Vagina (tissue), 2 donors: ENCODE measurements at regions of chr11 and their contacts with region 1.

Region 1: GRCh38 chr11:83193315-83194280 is at the start of gene ANKRD42:
- DNase-seq: peak; percentile 96
- H3K4me3 ChIP-seq: peak within 1 kb of the TSS; percentile 69 to 88
- H3K27ac ChIP-seq: peak within 1 kb of the TSS; percentile 77
- H3K4me1 ChIP-seq: peaks cover 53% of the 10 kb centered on the region
- H3K27me3 ChIP-seq: no peaks in the 10 kb centered on the region
- CTCF ChIP-seq: no peak
- POLR2A ChIP-seq: peak in 1 of 2 donors; percentile 72
- total RNA-seq, gene ANKRD42: 10.3 TPM

Region 2: GRCh38 chr11:82900277-82901164 is 293.1 kb before region 1 on chr11 and contains the start of gene PRCP:
- intact Hi-C with region 1: loop called (anchors 5 kb)
- DNase-seq: peak; percentile 96 to 97
- H3K4me3 ChIP-seq: peak within 1 kb of the TSS; percentile 66 to 68
- H3K27ac ChIP-seq: peak within 1 kb of the TSS; percentile 93
- H3K4me1 ChIP-seq: peaks cover 16% of the 10 kb centered on the region
- H3K27me3 ChIP-seq: no peaks in the 10 kb centered on the region
- CTCF ChIP-seq: peak in 1 of 3 experiments; percentile 16
- POLR2A ChIP-seq: peak; percentile 42 to 65
- total RNA-seq, gene PRCP: 79.3 TPM